Naive thymus-derived CD4-positive, alpha-beta T cell (primary cell): ENCODE measurements at regions of chr7 and their contacts with region 1.

Region 1: DNA sequence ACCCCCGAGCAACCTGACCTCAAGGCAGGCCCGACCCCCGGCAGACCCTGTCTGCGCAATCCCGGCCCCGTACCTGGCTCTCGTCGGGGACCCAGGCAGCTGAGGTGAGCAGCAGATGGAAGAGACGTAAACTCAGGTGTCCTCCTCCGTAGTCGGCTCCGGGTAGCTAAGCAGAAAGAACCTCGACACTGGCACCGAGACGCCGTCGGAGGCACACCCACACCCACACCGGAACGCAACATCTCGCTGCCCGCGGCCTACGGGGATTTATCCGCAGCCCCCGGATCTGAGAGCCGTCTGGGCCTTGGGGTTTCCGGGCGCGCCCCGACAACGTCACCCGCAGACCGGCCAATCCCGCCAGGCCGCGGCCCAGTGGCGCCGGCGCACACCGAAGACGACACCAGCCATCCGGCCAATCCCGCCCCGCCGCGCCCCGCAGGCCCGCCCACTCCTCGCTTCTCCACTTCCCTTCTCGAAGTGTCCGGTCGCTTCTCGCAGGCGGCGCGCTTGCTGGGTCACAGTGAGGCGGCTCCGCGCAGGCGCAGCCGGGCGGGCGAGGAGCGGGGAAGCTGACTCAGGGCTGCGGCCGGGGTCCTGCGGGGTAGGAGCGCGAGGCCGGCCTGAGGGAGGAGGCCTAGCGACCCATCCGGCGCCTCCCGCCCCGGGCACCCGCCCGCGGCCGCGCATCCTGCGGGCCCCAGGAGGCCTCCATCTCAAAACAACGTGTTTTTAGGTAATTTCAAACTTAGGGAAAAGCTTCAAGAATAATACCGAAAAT is at the start of gene ZFAND2A:
- DNase-seq: peak; percentile 96 to 99 (median 98)
- ATAC-seq: peak; percentile 99
- H3K4me3 ChIP-seq: peak within 1 kb of the TSS; percentile 97
- H3K4me3 Mint-ChIP-seq: peak within 1 kb of the TSS; percentile 72 to 94 (median 88)
- H3K27ac ChIP-seq: peak within 1 kb of the TSS; percentile 96
- H3K27ac Mint-ChIP-seq: peak within 1 kb of the TSS; percentile 74 to 95 (median 90)
- H3K4me1 ChIP-seq: peaks cover 13 to 18% of the 10 kb centered on the region in 2 donors
- H3K4me1 Mint-ChIP-seq: peaks cover 9 to 35% (median 28%) of the 10 kb centered on the region in 7 donors
- H3K27me3 ChIP-seq: no peaks in the 10 kb centered on the region
- H3K27me3 Mint-ChIP-seq: no peaks in the 10 kb centered on the region
- total RNA-seq, gene ZFAND2A: 21.2 to 74.5 (median 38.6) TPM

Region 2: DNA sequence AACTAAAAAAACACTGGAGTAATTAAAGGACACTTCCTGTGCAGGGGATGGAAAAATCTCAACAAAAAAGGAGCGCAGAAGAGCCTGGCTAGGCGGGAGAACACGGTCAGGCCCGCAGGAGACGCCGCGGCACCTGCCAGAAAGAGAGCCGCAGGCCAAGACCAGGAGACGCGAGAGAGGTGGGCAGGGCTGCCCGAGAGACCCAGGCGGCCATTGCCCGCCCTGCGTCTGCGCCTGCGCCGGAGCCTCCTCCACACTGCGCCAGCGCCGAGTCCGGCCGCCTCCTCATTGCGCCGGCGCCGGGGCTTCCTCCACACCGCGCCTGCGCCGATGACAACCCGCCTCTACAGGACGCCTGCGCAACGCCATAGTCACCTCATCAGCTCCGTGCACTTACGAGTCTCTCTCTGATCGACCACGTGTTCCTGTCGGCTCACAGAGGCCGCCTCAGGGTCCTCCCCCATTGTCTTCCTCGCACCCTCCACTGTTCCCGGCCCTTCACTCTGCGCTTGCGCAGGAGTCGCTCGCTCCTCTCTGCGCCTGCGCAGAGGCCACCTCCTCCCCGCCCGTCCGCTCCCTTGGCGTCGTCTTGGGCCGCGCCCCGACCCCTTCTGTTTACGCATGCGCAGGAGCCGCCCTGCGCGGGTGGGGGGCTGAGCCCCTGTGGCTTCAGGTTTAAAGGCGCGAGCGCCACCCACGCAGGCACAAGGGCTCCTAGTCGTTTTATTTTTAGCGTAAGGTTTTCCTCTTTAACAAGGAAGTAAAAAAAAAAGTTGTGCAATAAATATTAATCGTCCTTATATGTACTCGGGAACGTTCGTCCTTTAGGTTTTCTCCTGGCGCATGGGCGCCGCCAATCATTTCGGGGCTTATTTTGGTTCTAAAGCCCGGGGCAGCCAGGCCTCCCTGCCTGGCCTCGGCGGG is 1010.9 kb before region 1 on chr7:
- CTCF ChIA-PET with region 1: no interaction called
- POLR2A ChIA-PET with region 1: no interaction called
- intact Hi-C with region 1: loop called in 1 of 2 experiments (anchors 5 kb)
- DNase-seq: peak; percentile 97 to 99 (median 99)
- ATAC-seq: peak; percentile 97
- H3K4me3 ChIP-seq: peak overlapping the region; percentile 52
- H3K4me3 Mint-ChIP-seq: peak overlapping the region; percentile 80 to 97 (median 91)
- H3K27ac ChIP-seq: peak overlapping the region; percentile 82
- H3K27ac Mint-ChIP-seq: peak overlapping the region; percentile 94 to 100 (median 99)
- H3K4me1 ChIP-seq: peaks cover 18 to 19% of the 10 kb centered on the region in 2 donors
- H3K4me1 Mint-ChIP-seq: peaks cover 9 to 25% (median 20%) of the 10 kb centered on the region in 7 donors
- H3K27me3 ChIP-seq: no peaks in the 10 kb centered on the region
- H3K27me3 Mint-ChIP-seq: peaks cover 0 to 4% (median 0%) of the 10 kb centered on the region in 5 donors

Region 3: GRCh38 chr7:1081931-1082401 is 78.1 kb before region 1 on chr7:
- CTCF ChIA-PET with region 1: no interaction called
- POLR2A ChIA-PET with region 1: no interaction called
- intact Hi-C with region 1: no loop called
- DNase-seq: no peak
- ATAC-seq: no peak
- H3K4me3 ChIP-seq: no peak overlapping the region
- H3K4me3 Mint-ChIP-seq: no peak overlapping the region
- H3K27ac ChIP-seq: no peak overlapping the region
- H3K27ac Mint-ChIP-seq: no peak overlapping the region
- H3K4me1 ChIP-seq: peaks cover under 1 to 6% of the 10 kb centered on the region in 2 donors
- H3K4me1 Mint-ChIP-seq: peaks cover under 1 to 8% (median 5%) of the 10 kb centered on the region in 7 donors
- H3K27me3 ChIP-seq: no peaks in the 10 kb centered on the region
- H3K27me3 Mint-ChIP-seq: peaks cover 0 to under 1% (median 0%) of the 10 kb centered on the region in 5 donors

Region 4: GRCh38 chr7:1368682-1369571 is 208.8 kb after region 1 on chr7:
- CTCF ChIA-PET with region 1: no interaction called
- POLR2A ChIA-PET with region 1: no interaction called
- intact Hi-C with region 1: no loop called
- DNase-seq: peak in 2 of 9 donors; percentile 3 to 42
- ATAC-seq: peak; percentile 45
- H3K4me3 ChIP-seq: no peak overlapping the region
- H3K4me3 Mint-ChIP-seq: peak overlapping the region in 5 of 10 donors; percentile 12 to 43 (median 14)
- H3K27ac ChIP-seq: no peak overlapping the region
- H3K27ac Mint-ChIP-seq: no peak overlapping the region
- H3K4me1 ChIP-seq: no peaks in the 10 kb centered on the region
- H3K4me1 Mint-ChIP-seq: peaks cover 0 to 5% (median 0%) of the 10 kb centered on the region in 7 donors
- H3K27me3 ChIP-seq: no peaks in the 10 kb centered on the region
- H3K27me3 Mint-ChIP-seq: peaks cover 33 to 68% (median 39%) of the 10 kb centered on the region in 5 donors